CD4-positive, alpha-beta T cell (primary cell): ENCODE measurements at regions of chr11 and their contacts with region 1.

Region 1: GRCh38 chr11:74255741-74256369 is 55.6 kb downstream of the P4HA3 start:
- DNase-seq: peak; percentile 20 to 80 (median 43)
- ATAC-seq: peak; percentile 89
- H3K4me3 ChIP-seq: no peak overlapping the region
- H3K4me3 Mint-ChIP-seq: no peak overlapping the region
- H3K27ac ChIP-seq: no peak overlapping the region
- H3K27ac Mint-ChIP-seq: no peak overlapping the region
- H3K4me1 ChIP-seq: no peaks in the 10 kb centered on the region
- H3K4me1 Mint-ChIP-seq: peaks cover 7% of the 10 kb centered on the region
- H3K27me3 ChIP-seq: no peaks in the 10 kb centered on the region
- H3K27me3 Mint-ChIP-seq: no peaks in the 10 kb centered on the region
- CTCF ChIP-seq: peak; percentile 96

Region 2: GRCh38 chr11:74232311-74232950 is 23.4 kb before region 1 on chr11:
- CTCF ChIA-PET with region 1: interaction called, 3 read pairs
- POLR2A ChIA-PET with region 1: interaction called, 11 read pairs
- intact Hi-C with region 1: no loop called
- DNase-seq: peak in 12 of 14 experiments; percentile 5 to 77 (median 30)
- ATAC-seq: peak; percentile 91
- H3K4me3 ChIP-seq: no peak overlapping the region
- H3K4me3 Mint-ChIP-seq: peak overlapping the region; percentile 7
- H3K27ac ChIP-seq: peak overlapping the region; percentile 68 to 78
- H3K27ac Mint-ChIP-seq: no peak overlapping the region
- H3K4me1 ChIP-seq: peaks cover 19% of the 10 kb centered on the region
- H3K4me1 Mint-ChIP-seq: peaks cover 43% of the 10 kb centered on the region
- H3K27me3 ChIP-seq: no peaks in the 10 kb centered on the region
- H3K27me3 Mint-ChIP-seq: no peaks in the 10 kb centered on the region
- CTCF ChIP-seq: no peak

Region 3: GRCh38 chr11:74321487-74322188 is 65.8 kb after region 1 on chr11:
- CTCF ChIA-PET with region 1: interaction called, 8 read pairs
- POLR2A ChIA-PET with region 1: interaction called, 10 read pairs
- intact Hi-C with region 1: loop called (anchors 1 to 2 kb)
- DNase-seq: peak in 5 of 14 experiments; percentile 12 to 63 (median 26)
- ATAC-seq: peak; percentile 58
- H3K4me3 ChIP-seq: no peak overlapping the region
- H3K4me3 Mint-ChIP-seq: no peak overlapping the region
- H3K27ac ChIP-seq: no peak overlapping the region
- H3K27ac Mint-ChIP-seq: no peak overlapping the region
- H3K4me1 ChIP-seq: no peaks in the 10 kb centered on the region
- H3K4me1 Mint-ChIP-seq: no peaks in the 10 kb centered on the region
- H3K27me3 ChIP-seq: peaks cover 0 to 11% of the 10 kb centered on the region in 2 experiments
- H3K27me3 Mint-ChIP-seq: peaks cover 4% of the 10 kb centered on the region
- CTCF ChIP-seq: peak; percentile 56

Region 4: DNA sequence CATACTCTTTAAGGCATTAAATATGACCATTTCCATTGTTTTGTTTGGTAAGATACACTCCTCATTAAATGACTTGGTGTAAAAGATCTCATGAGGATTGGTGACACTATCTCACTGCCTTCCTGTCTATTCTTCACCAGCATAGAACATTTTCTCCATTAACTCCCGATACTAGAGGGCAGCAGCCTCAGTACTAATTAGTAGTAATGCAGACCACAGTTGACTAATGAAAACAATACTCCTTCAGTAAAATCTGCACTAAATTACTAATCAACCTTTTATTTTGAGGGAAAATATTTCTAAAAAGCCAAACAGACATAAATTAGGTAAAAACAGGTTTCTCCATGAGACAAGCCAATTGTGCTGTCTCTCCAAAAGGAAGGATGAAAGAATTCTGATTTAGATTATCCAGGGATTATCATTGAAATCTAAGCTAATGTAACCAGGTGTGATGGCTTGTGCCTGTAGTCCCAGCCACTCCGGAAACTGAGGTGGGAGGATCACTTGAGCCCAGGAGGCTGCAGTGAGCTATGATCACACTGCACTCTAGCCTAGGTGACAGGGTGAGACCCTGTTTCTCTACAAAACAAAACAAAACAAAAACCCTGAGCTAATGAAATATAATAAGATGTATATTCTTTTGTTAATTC is 132.9 kb after region 1 on chr11:
- CTCF ChIA-PET with region 1: no interaction called
- POLR2A ChIA-PET with region 1: no interaction called
- intact Hi-C with region 1: loop called in 1 of 2 experiments (anchors 5 kb)
- DNase-seq: peak; percentile 14 to 84 (median 62)
- ATAC-seq: peak; percentile 91
- H3K4me3 ChIP-seq: no peak overlapping the region
- H3K4me3 Mint-ChIP-seq: peak overlapping the region; percentile 35
- H3K27ac ChIP-seq: no peak overlapping the region
- H3K27ac Mint-ChIP-seq: peak overlapping the region; percentile 40
- H3K4me1 ChIP-seq: peaks cover 4% of the 10 kb centered on the region
- H3K4me1 Mint-ChIP-seq: peaks cover 38% of the 10 kb centered on the region
- H3K27me3 ChIP-seq: no peaks in the 10 kb centered on the region
- H3K27me3 Mint-ChIP-seq: no peaks in the 10 kb centered on the region
- CTCF ChIP-seq: peak; percentile 88

Region 5: GRCh38 chr11:74570266-74571061 is 314.6 kb after region 1 on chr11:
- CTCF ChIA-PET with region 1: interaction called, 3 read pairs
- POLR2A ChIA-PET with region 1: no interaction called
- intact Hi-C with region 1: loop called (anchors 2 to 5 kb)
- DNase-seq: peak in 5 of 14 experiments; percentile 10 to 57 (median 34)
- ATAC-seq: no peak
- H3K4me3 ChIP-seq: no peak overlapping the region
- H3K4me3 Mint-ChIP-seq: no peak overlapping the region
- H3K27ac ChIP-seq: no peak overlapping the region
- H3K27ac Mint-ChIP-seq: no peak overlapping the region
- H3K4me1 ChIP-seq: no peaks in the 10 kb centered on the region
- H3K4me1 Mint-ChIP-seq: no peaks in the 10 kb centered on the region
- H3K27me3 ChIP-seq: no peaks in the 10 kb centered on the region
- H3K27me3 Mint-ChIP-seq: peaks cover 8% of the 10 kb centered on the region
- CTCF ChIP-seq: peak; percentile 44